B cell (primary cell): ENCODE measurements at regions of chr17 and their contacts with region 1.

Region 1: GRCh38 chr17:30104575-30105339 is 11.9 kb upstream of the NSRP1 start:
- DNase-seq: peak; percentile 85
- ATAC-seq: peak; percentile 98
- H3K4me3 ChIP-seq: peak overlapping the region; percentile 20 to 59 (median 54)
- H3K4me3 Mint-ChIP-seq: peak overlapping the region; percentile 87
- H3K27ac ChIP-seq: no peak overlapping the region
- H3K27ac Mint-ChIP-seq: no peak overlapping the region
- H3K4me1 ChIP-seq: peaks cover 3 to 5% of the 10 kb centered on the region in 2 donors
- H3K4me1 Mint-ChIP-seq: peaks cover 5% of the 10 kb centered on the region
- H3K27me3 ChIP-seq: no peaks in the 10 kb centered on the region
- H3K27me3 Mint-ChIP-seq: peaks cover 2% of the 10 kb centered on the region
- CTCF ChIP-seq: peak; percentile 93

Region 2: DNA sequence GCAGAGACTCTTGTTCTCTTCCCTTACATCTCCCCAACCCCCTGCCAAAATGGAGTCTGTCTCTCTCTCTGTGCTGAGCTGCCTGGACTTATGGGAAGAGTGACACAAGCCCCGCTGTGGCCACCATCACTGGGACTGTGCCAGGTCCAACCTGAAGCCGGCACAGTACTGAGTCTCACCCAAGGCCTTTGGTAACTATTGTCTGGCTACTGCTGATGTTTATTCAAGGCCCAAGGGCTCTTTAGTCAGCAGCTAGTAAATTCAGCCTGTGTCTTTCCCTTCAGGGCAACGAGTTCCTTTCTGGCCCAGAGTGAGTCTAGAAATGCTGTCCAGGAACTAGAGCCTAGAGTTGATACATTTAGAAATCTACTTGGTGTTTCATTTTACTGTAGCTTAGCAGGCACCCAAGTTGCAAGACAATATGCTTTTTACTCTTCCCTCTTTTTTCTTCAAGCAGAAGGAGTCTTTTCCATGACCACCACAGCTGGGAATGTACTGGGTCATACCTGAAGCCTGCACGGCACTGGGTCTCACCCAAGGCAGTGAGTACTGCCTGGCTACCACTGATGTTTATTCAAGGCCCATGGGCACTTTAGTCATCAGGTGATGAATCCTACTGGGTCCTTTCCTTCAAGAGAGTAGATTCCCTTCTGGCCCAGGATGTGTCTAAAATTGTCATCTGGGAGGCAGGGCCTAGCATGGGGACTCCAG is 145.7 kb before region 1 on chr17:
- CTCF ChIA-PET with region 1: no interaction called
- POLR2A ChIA-PET with region 1: no interaction called
- intact Hi-C with region 1: no loop called
- DNase-seq: no peak
- ATAC-seq: no peak
- H3K4me3 ChIP-seq: no peak overlapping the region
- H3K4me3 Mint-ChIP-seq: no peak overlapping the region
- H3K27ac ChIP-seq: no peak overlapping the region
- H3K27ac Mint-ChIP-seq: no peak overlapping the region
- H3K4me1 ChIP-seq: no peaks in the 10 kb centered on the region
- H3K4me1 Mint-ChIP-seq: no peaks in the 10 kb centered on the region
- H3K27me3 ChIP-seq: no peaks in the 10 kb centered on the region
- H3K27me3 Mint-ChIP-seq: no peaks in the 10 kb centered on the region
- CTCF ChIP-seq: no peak

Region 3: DNA sequence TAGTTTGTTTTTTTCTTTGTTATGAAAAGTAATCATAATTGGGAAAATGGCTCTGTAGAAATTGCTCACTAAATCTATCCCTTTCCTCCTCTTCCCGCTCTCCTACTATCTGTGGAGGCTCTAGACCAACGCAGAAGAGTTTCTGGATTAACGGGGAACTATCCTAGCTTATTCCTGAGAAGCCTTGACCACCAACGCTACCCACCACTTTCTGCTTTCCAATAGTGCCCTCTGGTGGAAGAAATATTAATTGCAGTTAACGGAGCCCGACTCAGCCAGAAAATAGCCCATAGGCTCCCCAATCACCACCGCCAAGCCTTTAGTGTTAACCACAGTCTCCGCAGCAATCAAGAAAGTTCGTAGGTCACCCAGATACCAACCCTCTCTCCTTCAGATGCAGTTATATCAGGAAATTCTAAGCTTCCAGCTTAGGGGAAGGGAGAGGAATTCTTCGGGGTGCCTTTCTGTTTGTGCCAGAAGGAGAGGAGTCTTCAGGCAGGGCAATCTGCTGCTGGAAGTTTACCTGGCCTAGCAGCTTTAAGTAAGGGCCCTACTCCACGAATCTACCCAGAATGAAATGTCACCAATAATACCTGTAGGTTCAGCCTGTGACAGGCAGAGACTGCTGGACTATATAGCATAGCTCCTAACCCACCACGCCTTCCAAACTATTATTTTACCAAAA is 11.2 kb before region 1 on chr17:
- CTCF ChIA-PET with region 1: interaction called, 124 read pairs
- POLR2A ChIA-PET with region 1: interaction called, 3 read pairs
- intact Hi-C with region 1: no loop called
- DNase-seq: peak; percentile 75
- ATAC-seq: peak; percentile 57
- H3K4me3 ChIP-seq: no peak overlapping the region
- H3K4me3 Mint-ChIP-seq: no peak overlapping the region
- H3K27ac ChIP-seq: no peak overlapping the region
- H3K27ac Mint-ChIP-seq: no peak overlapping the region
- H3K4me1 ChIP-seq: peaks cover 6 to 7% of the 10 kb centered on the region in 2 donors
- H3K4me1 Mint-ChIP-seq: peaks cover 12% of the 10 kb centered on the region
- H3K27me3 ChIP-seq: peaks cover 0 to 9% (median 8%) of the 10 kb centered on the region in 4 experiments
- H3K27me3 Mint-ChIP-seq: peaks cover 12% of the 10 kb centered on the region
- CTCF ChIP-seq: peak; percentile 90

Region 4: GRCh38 chr17:30116661-30117551 is 12.1 kb after region 1 on chr17 and contains the start of gene NSRP1:
- CTCF ChIA-PET with region 1: interaction called, 82 read pairs
- POLR2A ChIA-PET with region 1: no interaction called
- intact Hi-C with region 1: loop called (anchors 1 kb)
- DNase-seq: peak; percentile 94
- ATAC-seq: peak; percentile 97
- H3K4me3 ChIP-seq: peak within 1 kb of the TSS; percentile 95 to 100 (median 99)
- H3K4me3 Mint-ChIP-seq: peak within 1 kb of the TSS; percentile 98
- H3K27ac ChIP-seq: peak within 1 kb of the TSS; percentile 99
- H3K27ac Mint-ChIP-seq: peak within 1 kb of the TSS; percentile 98
- H3K4me1 ChIP-seq: peaks cover 12 to 13% of the 10 kb centered on the region in 2 donors
- H3K4me1 Mint-ChIP-seq: peaks cover 40% of the 10 kb centered on the region
- H3K27me3 ChIP-seq: no peaks in the 10 kb centered on the region
- H3K27me3 Mint-ChIP-seq: no peaks in the 10 kb centered on the region
- CTCF ChIP-seq: no peak
- total RNA-seq, gene NSRP1: 41.0 and 46.2 TPM in 2 replicates

Region 5: GRCh38 chr17:30124273-30124796 is 19.6 kb after region 1 on chr17:
- CTCF ChIA-PET with region 1: interaction called, 82 read pairs
- POLR2A ChIA-PET with region 1: interaction called, 10 read pairs
- intact Hi-C with region 1: no loop called
- DNase-seq: no peak
- ATAC-seq: no peak
- H3K4me3 ChIP-seq: no peak overlapping the region
- H3K4me3 Mint-ChIP-seq: no peak overlapping the region
- H3K27ac ChIP-seq: no peak overlapping the region
- H3K27ac Mint-ChIP-seq: no peak overlapping the region
- H3K4me1 ChIP-seq: peaks cover 0 to 6% of the 10 kb centered on the region in 2 donors
- H3K4me1 Mint-ChIP-seq: peaks cover 30% of the 10 kb centered on the region
- H3K27me3 ChIP-seq: no peaks in the 10 kb centered on the region
- H3K27me3 Mint-ChIP-seq: no peaks in the 10 kb centered on the region
- CTCF ChIP-seq: no peak

Region 6: GRCh38 chr17:30236766-30237165 is 132.0 kb after region 1 on chr17:
- CTCF ChIA-PET with region 1: interaction called, 20 read pairs
- POLR2A ChIA-PET with region 1: no interaction called
- intact Hi-C with region 1: no loop called
- DNase-seq: peak; percentile 15
- ATAC-seq: no peak
- H3K4me3 ChIP-seq: peak overlapping the region in 1 of 5 experiments; percentile 15
- H3K4me3 Mint-ChIP-seq: peak overlapping the region; percentile 44
- H3K27ac ChIP-seq: no peak overlapping the region
- H3K27ac Mint-ChIP-seq: no peak overlapping the region
- H3K4me1 ChIP-seq: peaks cover 28 to 35% of the 10 kb centered on the region in 2 donors
- H3K4me1 Mint-ChIP-seq: peaks cover 24% of the 10 kb centered on the region
- H3K27me3 ChIP-seq: peaks cover 0 to 56% (median 23%) of the 10 kb centered on the region in 4 experiments
- H3K27me3 Mint-ChIP-seq: peaks cover 70% of the 10 kb centered on the region
- CTCF ChIP-seq: no peak

Region 7: GRCh38 chr17:30278032-30278431 is 173.3 kb after region 1 on chr17:
- CTCF ChIA-PET with region 1: interaction called, 11 read pairs
- POLR2A ChIA-PET with region 1: no interaction called
- intact Hi-C with region 1: loop called (anchors 1 kb)
- DNase-seq: peak; percentile 25
- ATAC-seq: no peak
- H3K4me3 ChIP-seq: no peak overlapping the region
- H3K4me3 Mint-ChIP-seq: no peak overlapping the region
- H3K27ac ChIP-seq: no peak overlapping the region
- H3K27ac Mint-ChIP-seq: no peak overlapping the region
- H3K4me1 ChIP-seq: no peaks in the 10 kb centered on the region
- H3K4me1 Mint-ChIP-seq: no peaks in the 10 kb centered on the region
- H3K27me3 ChIP-seq: no peaks in the 10 kb centered on the region
- H3K27me3 Mint-ChIP-seq: no peaks in the 10 kb centered on the region
- CTCF ChIP-seq: peak; percentile 35

Region 8: DNA sequence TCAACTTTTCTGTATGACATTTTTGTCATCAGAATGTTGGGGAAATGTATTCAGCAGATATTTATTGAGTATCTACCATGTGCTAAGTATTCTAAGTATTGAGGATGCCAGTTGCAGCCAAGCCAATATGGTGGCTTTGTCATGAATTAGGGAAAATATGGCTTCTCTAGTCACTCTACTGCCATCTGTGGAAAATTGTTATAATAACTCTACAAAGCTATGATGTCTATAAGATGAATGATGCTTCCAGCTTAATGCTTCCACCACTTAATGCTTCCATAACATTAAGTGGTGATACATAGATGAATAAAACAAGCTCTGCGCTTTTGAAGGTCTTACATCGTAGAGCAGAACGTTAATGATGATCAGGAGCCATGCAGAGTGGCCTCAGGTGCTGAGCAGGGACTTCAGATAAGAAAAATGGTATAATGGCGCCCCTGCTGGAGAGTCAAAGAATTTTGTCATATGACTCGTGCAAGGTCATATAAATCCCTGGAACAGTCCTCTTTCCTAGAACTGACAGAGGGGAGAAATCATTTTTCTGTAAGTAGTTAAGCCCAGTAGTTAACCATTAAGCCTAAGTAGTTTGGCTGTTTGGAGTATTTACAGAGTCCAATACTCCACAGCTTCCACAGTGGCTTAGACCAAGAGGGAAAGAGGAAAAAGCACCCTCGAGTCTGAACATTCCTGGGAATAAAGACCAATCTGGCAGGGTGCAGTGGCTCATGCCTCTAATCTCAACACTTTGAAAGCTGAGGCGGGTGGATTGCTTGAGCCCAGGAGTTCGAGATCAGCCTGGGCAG is 231.8 kb after region 1 on chr17:
- CTCF ChIA-PET with region 1: interaction called, 218 read pairs
- POLR2A ChIA-PET with region 1: interaction called, 7 read pairs
- intact Hi-C with region 1: loop called (anchors 1 kb)
- DNase-seq: peak; percentile 71
- ATAC-seq: peak; percentile 42
- H3K4me3 ChIP-seq: no peak overlapping the region
- H3K4me3 Mint-ChIP-seq: no peak overlapping the region
- H3K27ac ChIP-seq: no peak overlapping the region
- H3K27ac Mint-ChIP-seq: no peak overlapping the region
- H3K4me1 ChIP-seq: peaks cover 5 to 6% of the 10 kb centered on the region in 2 donors
- H3K4me1 Mint-ChIP-seq: peaks cover 11% of the 10 kb centered on the region
- H3K27me3 ChIP-seq: no peaks in the 10 kb centered on the region
- H3K27me3 Mint-ChIP-seq: peaks cover 7% of the 10 kb centered on the region
- CTCF ChIP-seq: peak; percentile 89